PC-3 (cell line): ENCODE measurements at regions of chr1 and their contacts with region 1.

Region 1: GRCh38 chr1:114320586-114320985 is 166.9 kb upstream of the SYT6 start:
- DNase-seq: peak; percentile 65
- ATAC-seq: peak; percentile 50
- H3K4me3 ChIP-seq: no peak overlapping the region
- H3K27ac ChIP-seq: no peak overlapping the region
- H3K4me1 ChIP-seq: no peaks in the 10 kb centered on the region; the same call in 1 of the 2 replicates
- H3K27me3 ChIP-seq: no peaks in the 10 kb centered on the region
- CTCF ChIP-seq: no peak

Region 2: DNA sequence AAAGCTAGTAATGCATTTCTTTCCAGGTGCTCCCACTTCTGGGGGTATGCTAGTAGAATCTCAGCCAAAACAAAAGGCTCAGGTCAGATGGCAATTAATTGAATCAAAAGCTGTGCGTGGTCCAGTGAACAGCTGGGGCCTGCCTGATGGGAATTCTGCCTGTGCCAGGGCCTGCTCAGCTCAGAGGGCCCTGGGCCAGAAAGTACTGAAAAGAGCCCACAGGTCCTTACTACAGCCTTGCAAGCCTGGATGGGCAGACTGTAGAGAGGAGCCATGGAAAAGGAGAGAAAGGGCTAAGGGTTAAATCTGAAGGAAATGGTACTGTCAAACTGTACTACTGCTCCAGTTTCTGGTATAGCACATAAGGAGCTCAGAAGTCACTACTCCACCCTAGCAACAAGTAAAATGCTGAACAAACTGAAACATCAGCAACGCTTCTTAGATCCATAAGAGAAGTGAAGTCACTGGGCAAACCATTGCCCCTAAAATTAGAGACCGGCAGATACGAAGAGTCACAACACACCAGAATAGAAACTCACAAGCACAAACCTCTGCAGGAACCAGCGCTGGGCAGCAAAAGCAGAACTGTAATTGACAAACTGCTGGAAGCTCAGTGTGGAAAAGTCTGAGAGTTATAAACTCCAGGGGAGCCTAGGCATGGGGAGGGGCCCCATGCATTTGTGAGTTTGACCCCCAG is 45.8 kb before region 1 on chr1:
- CTCF ChIA-PET with region 1: no interaction called
- POLR2A ChIA-PET with region 1: no interaction called
- intact Hi-C with region 1: no loop called
- DNase-seq: no peak
- ATAC-seq: no peak
- H3K4me3 ChIP-seq: no peak overlapping the region
- H3K27ac ChIP-seq: no peak overlapping the region
- H3K4me1 ChIP-seq: no peaks in the 10 kb centered on the region
- H3K27me3 ChIP-seq: peaks cover 64% of the 10 kb centered on the region
- CTCF ChIP-seq: no peak

Region 3: GRCh38 chr1:114289306-114289705 is 31.3 kb before region 1 on chr1:
- CTCF ChIA-PET with region 1: no interaction called
- POLR2A ChIA-PET with region 1: no interaction called
- intact Hi-C with region 1: no loop called
- DNase-seq: no peak
- ATAC-seq: no peak
- H3K4me3 ChIP-seq: no peak overlapping the region
- H3K27ac ChIP-seq: no peak overlapping the region
- H3K4me1 ChIP-seq: no peaks in the 10 kb centered on the region
- H3K27me3 ChIP-seq: peaks cover 49% of the 10 kb centered on the region
- CTCF ChIP-seq: no peak

Region 4: DNA sequence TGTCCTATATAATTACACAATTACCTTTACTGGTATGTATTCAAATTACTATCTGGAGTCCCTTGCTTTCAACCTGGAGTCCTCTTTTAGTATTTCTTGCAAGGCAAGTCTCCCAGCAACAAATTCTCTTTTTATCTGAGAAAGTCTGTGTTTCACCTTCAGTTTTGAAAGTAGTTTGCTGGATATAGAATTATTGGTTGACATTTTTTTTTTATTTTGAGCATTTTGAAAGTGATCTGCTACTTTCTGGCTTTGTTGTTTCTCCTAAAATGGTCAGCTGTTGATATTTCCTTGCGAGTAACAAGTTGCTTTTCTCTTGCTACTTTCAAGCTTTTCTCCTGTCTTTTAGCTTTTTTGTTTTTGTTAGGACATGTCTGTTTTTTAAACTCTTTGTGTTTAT is 64.3 kb after region 1 on chr1:
- CTCF ChIA-PET with region 1: no interaction called
- POLR2A ChIA-PET with region 1: interaction called, 11 read pairs
- intact Hi-C with region 1: no loop called
- DNase-seq: no peak
- ATAC-seq: no peak
- H3K4me3 ChIP-seq: no peak overlapping the region
- H3K27ac ChIP-seq: no peak overlapping the region
- H3K4me1 ChIP-seq: no peaks in the 10 kb centered on the region
- H3K27me3 ChIP-seq: no peaks in the 10 kb centered on the region
- CTCF ChIP-seq: no peak